ENCODE measurements at regions of chr3 and their contacts with region 1.

Region 1: DNA sequence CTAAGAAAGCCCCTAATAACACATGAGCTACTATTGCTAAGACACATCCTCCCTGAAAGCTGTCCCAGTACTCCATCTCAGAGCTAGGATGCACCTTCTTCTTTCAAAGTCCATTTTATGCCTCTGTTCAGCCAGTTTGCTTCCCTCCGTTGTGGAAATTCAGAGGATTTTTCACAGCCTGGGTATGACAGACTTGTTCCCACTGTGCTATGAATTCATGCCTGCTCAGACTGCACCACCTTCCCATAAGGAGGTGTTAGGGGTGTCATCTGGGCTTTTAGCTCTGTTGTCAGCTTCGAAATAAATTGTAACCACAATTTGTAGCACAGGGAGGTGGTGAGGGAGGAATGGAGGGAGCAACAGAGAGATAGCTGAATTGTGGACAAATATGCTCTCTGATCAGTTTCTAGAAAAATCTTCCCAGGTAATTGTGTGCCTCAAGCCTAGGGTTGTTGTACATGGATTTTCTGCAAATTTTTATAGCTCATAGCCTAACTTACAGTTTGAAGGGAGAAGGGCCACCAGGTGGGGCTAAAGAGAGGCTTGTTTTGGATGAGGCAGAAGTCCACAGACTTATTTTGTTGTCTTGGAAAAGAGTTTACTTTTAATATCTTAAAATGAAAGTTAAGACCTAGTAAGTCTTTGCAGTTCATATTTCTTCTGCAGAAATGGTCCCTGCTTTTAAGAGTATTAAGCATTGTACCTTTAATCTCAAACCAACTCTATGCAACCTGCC is 462.0 kb downstream of the PDCD6IP start:
- DNase-seq: peak in 1 of 2 experiments; percentile 77
- H3K4me3 ChIP-seq: no peak overlapping the region
- H3K27ac ChIP-seq: no peak overlapping the region
- H3K4me1 ChIP-seq: peaks cover 0 to 6% (median 4%) of the 10 kb centered on the region in 4 experiments; a peak in 4 of 7 replicates
- H3K27me3 ChIP-seq: peaks cover 0 to under 1% (median 0%) of the 10 kb centered on the region in 4 experiments; a peak in 1 of 7 replicates
- CTCF ChIP-seq: peak in 2 of 3 experiments; percentile 50 to 55; a peak in 3 of 4 replicates
- EP300 ChIP-seq: no peak
- POLR2A ChIP-seq: no peak
- RAD21 ChIP-seq: peak; percentile 57 to 63

Region 2: GRCh38 chr3:34106879-34107278 is 153.6 kb before region 1 on chr3:
- CTCF ChIA-PET with region 1: interaction called, 24 read pairs
- POLR2A ChIA-PET with region 1: no interaction called
- DNase-seq: peak; percentile 58 to 73
- H3K4me3 ChIP-seq: no peak overlapping the region
- H3K27ac ChIP-seq: no peak overlapping the region
- H3K4me1 ChIP-seq: no peaks in the 10 kb centered on the region
- H3K27me3 ChIP-seq: no peaks in the 10 kb centered on the region
- CTCF ChIP-seq: peak; percentile 60 to 92 (median 80)
- EP300 ChIP-seq: no peak
- POLR2A ChIP-seq: no peak
- RAD21 ChIP-seq: peak; percentile 86 to 88

Region 3: DNA sequence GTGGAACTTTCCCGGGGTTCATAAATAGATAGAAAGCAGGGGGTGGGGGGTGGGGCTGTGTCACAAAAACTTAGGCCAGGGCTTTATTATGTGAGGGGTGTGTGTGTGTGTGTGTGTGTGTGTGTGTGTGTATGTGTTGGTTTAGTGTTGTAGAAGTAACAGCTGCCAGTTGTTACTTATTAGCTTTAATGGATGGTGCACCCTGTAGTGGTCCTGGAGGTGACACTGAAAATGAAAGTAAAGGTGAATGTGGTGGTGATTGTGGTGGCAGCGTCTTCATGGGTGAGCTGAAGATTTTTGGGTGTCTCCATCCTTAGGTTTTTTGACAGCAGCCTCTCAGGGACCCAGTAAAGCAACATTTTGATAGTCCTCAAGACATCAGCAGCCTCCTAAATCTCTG is 12.1 kb before region 1 on chr3:
- CTCF ChIA-PET with region 1: interaction called, 29 read pairs
- POLR2A ChIA-PET with region 1: no interaction called
- DNase-seq: no peak
- H3K4me3 ChIP-seq: no peak overlapping the region
- H3K27ac ChIP-seq: no peak overlapping the region
- H3K4me1 ChIP-seq: no peaks in the 10 kb centered on the region
- H3K27me3 ChIP-seq: no peaks in the 10 kb centered on the region
- CTCF ChIP-seq: no peak
- EP300 ChIP-seq: no peak
- POLR2A ChIP-seq: no peak
- RAD21 ChIP-seq: no peak

Region 4: GRCh38 chr3:34305266-34305665 is 44.8 kb after region 1 on chr3:
- CTCF ChIA-PET with region 1: interaction called, 11 read pairs
- POLR2A ChIA-PET with region 1: no interaction called
- DNase-seq: no peak
- H3K4me3 ChIP-seq: no peak overlapping the region
- H3K27ac ChIP-seq: no peak overlapping the region
- H3K4me1 ChIP-seq: peaks cover 0 to 6% (median 2%) of the 10 kb centered on the region in 4 experiments; a peak in 4 of 7 replicates
- H3K27me3 ChIP-seq: no peaks in the 10 kb centered on the region; a peak in 2 of 7 replicates
- CTCF ChIP-seq: no peak
- EP300 ChIP-seq: no peak
- POLR2A ChIP-seq: no peak
- RAD21 ChIP-seq: no peak

Region 5: GRCh38 chr3:34387826-34388564 is 127.6 kb after region 1 on chr3:
- CTCF ChIA-PET with region 1: interaction called, 20 read pairs
- POLR2A ChIA-PET with region 1: no interaction called
- DNase-seq: no peak
- H3K4me3 ChIP-seq: no peak overlapping the region
- H3K27ac ChIP-seq: no peak overlapping the region
- H3K4me1 ChIP-seq: no peaks in the 10 kb centered on the region; a peak in 1 of 7 replicates
- H3K27me3 ChIP-seq: no peaks in the 10 kb centered on the region; a peak in 1 of 7 replicates
- CTCF ChIP-seq: peak in 2 of 3 experiments; percentile 21 to 44; a peak in 1 of 4 replicates
- EP300 ChIP-seq: no peak
- POLR2A ChIP-seq: no peak
- RAD21 ChIP-seq: peak in 1 of 2 experiments; percentile 36; a peak in 3 of 4 replicates